ENCODE measurements at regions of chr3 and their contacts with region 1.

Region 1: GRCh38 chr3:161423911-161424522 is 52.7 kb upstream of the SPTSSB start:
- DNase-seq: no peak
- H3K4me3 ChIP-seq: no peak overlapping the region
- H3K27ac ChIP-seq: no peak overlapping the region
- H3K4me1 ChIP-seq: peaks cover 0 to 3% (median 0%) of the 10 kb centered on the region in 6 donors
- H3K27me3 ChIP-seq: no peaks in the 10 kb centered on the region
- CTCF ChIP-seq: peak; percentile 40 to 80 (median 73)
- POLR2A ChIP-seq: no peak

Region 2: DNA sequence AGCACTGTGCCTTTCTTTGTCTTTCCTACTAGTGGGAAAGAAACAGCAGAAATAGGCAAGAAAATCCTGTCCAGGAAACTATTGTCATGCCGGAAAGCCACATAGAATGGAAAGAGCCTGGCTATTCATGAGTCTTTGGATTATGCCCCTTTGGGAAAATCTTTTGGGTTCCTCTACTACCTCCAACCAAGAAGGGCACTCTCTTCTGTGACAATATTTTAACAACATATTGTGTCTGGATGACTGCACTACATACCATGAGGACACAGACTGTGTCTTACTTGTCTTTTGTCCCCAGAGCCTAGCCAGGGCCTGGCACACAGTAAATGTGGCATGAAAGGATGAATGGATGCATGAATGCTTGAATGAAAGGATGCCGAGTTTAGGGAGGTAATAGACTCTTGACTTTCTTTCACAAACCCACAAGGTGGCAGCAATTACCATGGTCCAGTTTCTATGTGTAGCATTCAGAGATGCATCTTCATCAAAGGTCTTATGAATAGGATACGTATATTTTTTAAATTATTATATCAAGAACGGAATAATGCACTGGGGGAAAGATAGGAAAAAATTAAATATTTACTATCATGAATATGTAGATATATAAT is 716.7 kb before region 1 on chr3:
- intact Hi-C with region 1: loop called (anchors 10 kb)
- DNase-seq: no peak
- H3K4me3 ChIP-seq: no peak overlapping the region
- H3K27ac ChIP-seq: no peak overlapping the region
- H3K4me1 ChIP-seq: no peaks in the 10 kb centered on the region
- H3K27me3 ChIP-seq: peaks cover 0 to 19% (median 2%) of the 10 kb centered on the region in 7 donors
- CTCF ChIP-seq: peak in 9 of 11 experiments; percentile 16 to 67 (median 51)
- POLR2A ChIP-seq: no peak

Region 3: GRCh38 chr3:161274719-161275298 is 149.2 kb before region 1 on chr3:
- intact Hi-C with region 1: loop called (anchors 5 kb)
- DNase-seq: no peak
- H3K4me3 ChIP-seq: no peak overlapping the region
- H3K27ac ChIP-seq: no peak overlapping the region
- H3K4me1 ChIP-seq: no peaks in the 10 kb centered on the region
- H3K27me3 ChIP-seq: no peaks in the 10 kb centered on the region
- CTCF ChIP-seq: peak; percentile 6 to 62 (median 42)
- POLR2A ChIP-seq: no peak

Region 4: GRCh38 chr3:162170581-162170980 is 746.6 kb after region 1 on chr3:
- intact Hi-C with region 1: no loop called
- DNase-seq: no peak
- H3K4me3 ChIP-seq: no peak overlapping the region
- H3K27ac ChIP-seq: no peak overlapping the region
- H3K4me1 ChIP-seq: no peaks in the 10 kb centered on the region
- H3K27me3 ChIP-seq: no peaks in the 10 kb centered on the region
- CTCF ChIP-seq: no peak
- POLR2A ChIP-seq: no peak